Tibial artery (tissue), 4 donors: ENCODE measurements at regions of chr2 and their contacts with region 1.

Region 1: DNA sequence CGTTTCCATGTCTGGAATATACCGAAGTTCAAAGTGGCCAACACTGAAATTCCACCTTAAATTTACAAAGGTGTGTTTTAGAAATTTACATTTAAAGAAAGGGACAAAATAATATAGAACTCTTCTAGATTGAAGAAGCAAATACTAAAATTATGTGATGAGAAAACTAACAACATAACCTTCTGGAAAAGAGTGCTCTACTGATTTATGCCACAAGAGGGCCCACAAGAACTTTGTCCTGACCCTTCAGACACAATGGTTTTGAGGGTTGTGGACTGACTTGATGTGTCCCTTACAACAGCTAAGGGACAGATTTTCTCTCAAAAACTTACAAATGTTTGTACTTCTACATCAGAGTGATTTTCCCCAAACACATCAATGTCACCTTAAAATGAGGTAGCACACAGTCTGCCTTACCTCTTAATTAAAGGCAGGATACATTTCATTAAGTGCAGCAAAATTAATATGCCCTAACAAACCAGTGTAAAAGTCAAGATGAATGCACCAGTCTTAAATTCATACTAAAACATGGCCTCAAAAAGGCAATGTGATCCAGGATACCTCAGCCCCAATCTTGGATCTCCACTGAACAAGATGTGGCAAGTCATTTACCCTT is 36.2 kb downstream of the EIF2AK3 start:
- DNase-seq: peak in 1 of 2 donors; percentile 26
- H3K4me3 ChIP-seq: no peak overlapping the region
- H3K27ac ChIP-seq: no peak overlapping the region
- H3K4me1 ChIP-seq: no peaks in the 10 kb centered on the region
- H3K27me3 ChIP-seq: no peaks in the 10 kb centered on the region
- CTCF ChIP-seq: peak; percentile 67 to 71

Region 2: GRCh38 chr2:88239781-88240180 is 351.3 kb before region 1 on chr2:
- intact Hi-C with region 1: no loop called
- DNase-seq: no peak
- H3K4me3 ChIP-seq: no peak overlapping the region
- H3K27ac ChIP-seq: no peak overlapping the region
- H3K4me1 ChIP-seq: no peaks in the 10 kb centered on the region
- H3K27me3 ChIP-seq: no peaks in the 10 kb centered on the region
- CTCF ChIP-seq: no peak

Region 3: GRCh38 chr2:88669371-88670214 is 78.5 kb after region 1 on chr2:
- intact Hi-C with region 1: loop called (anchors 2 kb)
- DNase-seq: no peak
- H3K4me3 ChIP-seq: no peak overlapping the region
- H3K27ac ChIP-seq: no peak overlapping the region
- H3K4me1 ChIP-seq: no peaks in the 10 kb centered on the region
- H3K27me3 ChIP-seq: no peaks in the 10 kb centered on the region
- CTCF ChIP-seq: peak; percentile 32 to 50

Region 4: GRCh38 chr2:88686320-88686719 is 95.2 kb after region 1 on chr2:
- intact Hi-C with region 1: loop called (anchors 5 kb)
- DNase-seq: no peak
- H3K4me3 ChIP-seq: no peak overlapping the region
- H3K27ac ChIP-seq: no peak overlapping the region
- H3K4me1 ChIP-seq: peaks cover 0 to 11% (median 8%) of the 10 kb centered on the region in 4 donors
- H3K27me3 ChIP-seq: no peaks in the 10 kb centered on the region
- CTCF ChIP-seq: no peak